AG04449 (cell line): ENCODE measurements at regions of chr13 and their contacts with region 1.

Region 1: GRCh38 chr13:95191821-95192563 is 109.3 kb downstream of the ABCC4 start:
- DNase-seq: peak; percentile 36
- H3K4me3 ChIP-seq: no peak overlapping the region
- CTCF ChIP-seq: peak; percentile 99

Region 2: DNA sequence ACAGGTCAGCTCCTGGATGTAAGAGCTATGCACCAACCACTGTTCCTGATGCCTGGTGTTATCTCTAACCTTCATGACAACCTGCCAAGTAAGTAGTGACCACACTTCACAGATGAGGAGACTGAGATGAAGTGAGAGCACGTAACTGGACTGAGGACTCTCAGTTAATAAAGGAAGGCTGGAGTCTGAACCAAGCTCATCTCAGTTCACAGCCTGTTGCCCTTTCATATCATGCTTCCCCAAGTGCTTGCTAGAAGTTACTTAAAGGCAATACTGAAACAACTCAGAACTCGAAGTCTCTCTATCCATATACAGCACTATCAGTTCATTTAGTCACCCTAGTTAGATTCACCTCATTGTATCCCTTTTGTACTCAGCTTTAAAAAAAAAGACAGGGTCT is 10.4 kb before region 1 on chr13:
- CTCF ChIA-PET with region 1: interaction called, 63 read pairs
- POLR2A ChIA-PET with region 1: no interaction called
- DNase-seq: no peak
- H3K4me3 ChIP-seq: no peak overlapping the region
- CTCF ChIP-seq: no peak

Region 3: DNA sequence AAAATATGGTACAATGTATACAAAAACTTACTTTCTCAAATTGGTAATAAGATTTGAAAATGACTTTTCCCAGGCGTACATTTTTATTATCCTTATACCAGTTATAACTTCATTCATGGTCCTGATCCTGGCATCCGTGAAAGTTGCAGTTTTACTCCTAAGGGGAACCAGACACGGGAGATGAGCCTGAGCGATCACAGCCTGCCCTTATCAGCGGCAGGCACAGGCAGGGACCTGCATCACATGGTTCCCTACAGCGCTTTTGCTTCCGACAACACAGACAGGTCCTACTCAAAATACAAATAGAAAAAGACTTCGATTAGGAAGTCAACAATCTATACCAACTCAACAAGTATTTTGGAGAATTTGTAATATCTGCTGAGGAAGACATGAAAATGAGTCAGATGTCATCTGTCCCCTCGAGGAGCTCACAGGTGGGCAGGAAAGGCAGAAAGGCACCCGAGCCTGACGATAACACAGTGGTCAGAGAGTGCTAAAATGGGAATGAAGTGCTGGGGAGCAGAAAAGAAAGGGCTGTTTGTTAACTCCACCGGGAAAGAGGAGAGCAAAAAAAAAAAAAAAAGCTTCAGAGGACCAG is 15.9 kb after region 1 on chr13:
- CTCF ChIA-PET with region 1: interaction called, 74 read pairs
- POLR2A ChIA-PET with region 1: no interaction called
- DNase-seq: no peak
- H3K4me3 ChIP-seq: no peak overlapping the region
- CTCF ChIP-seq: no peak

Region 4: DNA sequence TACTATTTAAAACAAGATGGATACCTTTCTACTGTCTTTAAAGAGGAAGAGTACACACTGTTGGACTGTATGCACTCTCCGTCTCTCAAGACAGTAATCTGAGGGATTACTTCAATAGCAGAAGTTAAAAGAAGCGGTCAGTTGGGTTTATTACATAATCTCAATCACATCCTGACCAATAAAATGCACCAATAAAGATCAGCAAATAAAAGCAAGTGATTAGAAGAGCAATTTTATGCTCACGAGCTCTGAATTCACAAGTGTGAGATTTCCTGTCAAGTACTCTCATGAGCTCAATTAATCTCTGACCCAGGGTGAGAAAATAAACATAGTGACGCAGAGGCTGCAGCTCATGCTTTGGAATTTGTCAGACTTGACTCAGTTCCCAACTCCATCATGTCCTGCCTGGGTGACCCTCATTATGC is 97.0 kb after region 1 on chr13:
- CTCF ChIA-PET with region 1: interaction called, 31 read pairs
- POLR2A ChIA-PET with region 1: no interaction called
- DNase-seq: no peak
- H3K4me3 ChIP-seq: no peak overlapping the region
- CTCF ChIP-seq: no peak

Region 5: DNA sequence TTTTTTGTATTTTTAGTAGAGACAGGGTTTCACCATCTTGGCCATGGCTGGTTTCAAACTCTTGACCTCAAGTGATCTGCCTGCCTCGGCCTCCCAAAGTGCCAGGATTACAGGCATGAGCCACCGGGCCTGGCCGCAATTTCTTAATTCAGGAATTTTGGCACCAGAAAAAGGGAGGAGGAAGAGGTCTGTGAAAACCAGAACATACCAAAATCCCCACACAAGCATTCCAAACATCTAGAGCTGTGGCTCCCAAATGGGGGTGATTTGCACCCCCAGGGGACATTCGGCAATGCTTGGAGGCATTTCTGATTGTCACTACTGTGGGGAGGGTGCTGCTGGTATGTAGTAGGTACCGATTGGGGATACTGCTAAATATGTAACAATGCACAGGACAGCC is 149.4 kb after region 1 on chr13:
- CTCF ChIA-PET with region 1: interaction called, 19 read pairs
- POLR2A ChIA-PET with region 1: no interaction called
- DNase-seq: no peak
- H3K4me3 ChIP-seq: no peak overlapping the region
- CTCF ChIP-seq: no peak

Region 6: GRCh38 chr13:95367309-95367843 is 175.4 kb after region 1 on chr13:
- CTCF ChIA-PET with region 1: interaction called, 1,369 read pairs
- POLR2A ChIA-PET with region 1: no interaction called
- DNase-seq: no peak
- H3K4me3 ChIP-seq: no peak overlapping the region
- CTCF ChIP-seq: no peak

Region 7: DNA sequence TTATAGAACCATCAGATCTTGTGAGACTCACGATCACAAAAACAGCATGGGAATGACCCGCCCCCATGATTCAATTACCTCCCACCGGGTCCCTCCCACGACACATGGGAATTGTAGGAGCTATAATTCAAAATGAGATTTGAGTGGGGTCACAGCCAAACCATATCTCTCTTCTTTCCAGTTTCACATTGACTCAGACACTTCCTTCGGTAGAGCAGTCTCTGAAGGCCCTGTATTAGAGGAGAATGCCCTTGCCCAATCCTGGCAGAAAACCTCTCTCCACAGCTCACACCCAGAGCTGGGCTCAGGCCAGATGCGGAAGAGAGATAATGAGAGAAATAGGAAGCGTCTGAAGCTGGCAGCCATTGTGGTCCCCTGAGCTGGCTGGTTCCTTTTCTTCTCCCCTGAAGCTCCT is 288.1 kb after region 1 on chr13:
- CTCF ChIA-PET with region 1: interaction called, 13 read pairs
- POLR2A ChIA-PET with region 1: no interaction called
- DNase-seq: no peak
- H3K4me3 ChIP-seq: no peak overlapping the region
- CTCF ChIP-seq: no peak